Aorta (tissue), 5 donors: ENCODE measurements at regions of chr13 and their contacts with region 1.

Region 1: DNA sequence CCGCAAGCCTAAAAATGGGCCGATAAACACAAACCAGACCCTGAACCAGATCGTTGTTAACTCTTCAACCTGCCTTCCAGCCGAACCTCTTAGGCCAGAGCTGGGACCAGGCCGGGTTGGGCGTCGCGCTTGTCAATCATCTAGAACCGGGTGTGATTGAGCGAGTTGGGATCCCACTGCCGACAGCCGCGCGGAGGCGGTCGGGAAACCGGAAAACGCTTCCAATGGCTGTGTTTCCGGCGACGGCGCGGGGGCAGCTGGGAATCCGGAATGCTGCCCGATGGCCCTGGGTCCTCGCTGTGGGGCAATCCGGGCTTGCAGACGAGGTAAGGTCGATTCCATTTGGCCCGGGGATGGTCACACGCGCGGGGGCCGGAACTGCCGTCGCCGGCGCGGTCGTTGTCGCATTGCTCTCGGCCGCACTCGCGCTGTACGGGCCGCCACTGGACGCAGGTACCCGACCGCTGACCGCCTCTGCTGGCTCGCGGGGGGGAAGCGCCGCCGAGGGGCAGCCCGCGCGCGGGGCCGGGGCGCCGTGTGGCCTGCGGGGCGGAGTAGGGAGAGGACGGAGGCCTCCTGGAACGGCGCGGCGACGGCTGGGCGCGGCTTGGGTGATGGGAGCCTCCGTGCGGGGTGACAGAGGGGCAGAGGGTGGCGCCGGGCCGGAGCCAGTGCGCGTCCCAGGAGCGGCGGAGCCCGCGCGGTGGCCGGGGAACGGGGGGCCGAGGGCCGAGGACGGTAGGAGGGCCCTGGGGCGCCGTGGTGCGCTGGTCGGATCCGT is at the start of gene NAXD:
- DNase-seq: peak; percentile 96 to 98
- ATAC-seq: peak; percentile 95
- H3K4me3 ChIP-seq: peak within 1 kb of the TSS; percentile 49 to 64
- H3K27ac ChIP-seq: peak within 1 kb of the TSS; percentile 73 to 83
- H3K4me1 ChIP-seq: no peaks in the 10 kb centered on the region
- H3K27me3 ChIP-seq: no peaks in the 10 kb centered on the region
- total RNA-seq, gene NAXD: 21.2 to 30.4 TPM

Region 2: DNA sequence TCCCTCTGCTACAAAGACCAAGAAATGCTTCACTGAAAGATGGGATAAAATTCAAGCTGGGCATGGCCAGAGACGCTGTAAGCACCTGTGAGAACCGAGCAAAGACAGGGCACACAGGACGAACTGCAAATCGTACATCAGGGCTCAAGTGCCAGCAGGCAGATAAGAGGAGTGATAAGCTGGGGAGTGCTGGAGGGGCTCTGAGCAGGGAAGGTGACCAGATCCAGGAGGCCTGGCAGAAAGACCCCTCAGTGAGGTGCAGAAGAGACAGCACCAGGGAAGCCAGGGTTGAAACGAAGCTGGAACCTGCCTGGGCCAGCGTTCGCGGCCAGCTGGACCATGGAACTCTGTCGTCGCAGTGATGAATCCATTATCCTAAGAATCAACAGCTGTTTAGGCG is 64.2 kb before region 1 on chr13:
- intact Hi-C with region 1: no loop called
- DNase-seq: peak in 1 of 2 donors; percentile 24
- ATAC-seq: no peak
- H3K4me3 ChIP-seq: no peak overlapping the region
- H3K27ac ChIP-seq: peak overlapping the region in 1 of 2 donors; percentile 1
- H3K4me1 ChIP-seq: no peaks in the 10 kb centered on the region
- H3K27me3 ChIP-seq: no peaks in the 10 kb centered on the region

Region 3: GRCh38 chr13:110705826-110706569 is 90.5 kb after region 1 on chr13 and contains the start of gene CARS2:
- intact Hi-C with region 1: loop called (anchors 5 to 10 kb)
- DNase-seq: peak; percentile 97 to 99
- ATAC-seq: peak; percentile 99
- H3K4me3 ChIP-seq: peak within 1 kb of the TSS; percentile 52 to 55
- H3K27ac ChIP-seq: peak within 1 kb of the TSS in 1 of 2 donors; percentile 34
- H3K4me1 ChIP-seq: no peaks in the 10 kb centered on the region
- H3K27me3 ChIP-seq: no peaks in the 10 kb centered on the region
- total RNA-seq, gene CARS2: 47.3 to 65.5 TPM